ENCODE measurements at regions of chr11 and their contacts with region 1.

Region 1: DNA sequence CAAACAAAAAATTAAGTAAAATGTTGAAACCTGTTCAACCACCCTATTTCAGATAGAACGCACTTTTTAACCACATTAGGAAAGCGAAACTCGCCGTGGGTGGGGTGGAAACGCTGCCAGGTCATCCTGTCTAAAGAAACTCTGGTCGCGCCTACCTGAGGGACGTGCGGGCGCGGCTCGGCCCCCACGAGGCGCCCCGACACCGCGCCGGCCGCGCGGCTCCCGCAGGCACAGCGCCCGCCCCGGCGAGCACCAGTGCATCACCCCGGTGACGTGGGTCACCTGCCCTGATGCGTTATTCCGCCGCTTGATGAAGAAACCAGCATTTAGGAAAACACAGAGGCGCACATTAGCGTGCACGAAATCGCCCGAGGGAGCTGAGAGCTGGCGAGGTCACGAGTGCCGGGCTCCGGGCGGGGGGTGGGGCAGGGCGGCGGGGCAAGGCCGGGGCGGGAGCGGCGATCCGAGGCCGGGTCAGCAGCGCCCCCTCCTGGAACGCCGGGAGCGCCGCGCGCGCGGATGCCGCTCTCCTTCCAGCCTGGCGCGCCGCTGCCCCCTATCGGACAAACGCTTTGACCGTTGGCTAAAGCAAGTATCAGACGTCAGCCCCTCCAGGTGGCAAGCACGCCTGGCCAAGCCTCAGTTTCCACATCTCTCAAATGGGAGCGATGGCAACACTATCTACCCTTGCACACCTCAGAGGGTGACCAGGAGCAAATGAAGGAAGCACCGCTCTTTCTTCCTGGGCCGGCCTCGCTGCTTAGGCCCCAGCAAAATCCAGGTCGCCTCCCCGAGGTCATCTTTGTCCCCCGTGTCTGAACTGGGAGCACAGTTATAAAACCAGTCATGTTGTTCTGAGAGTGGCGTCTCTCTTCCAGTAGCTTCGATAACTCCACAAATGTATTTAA is 15.7 kb upstream of the SNX32 start:
- DNase-seq: peak; percentile 42
- ATAC-seq: peak; percentile 96
- H3K4me3 ChIP-seq: peak overlapping the region; percentile 64 to 77
- H3K27ac ChIP-seq: peak overlapping the region; percentile 80
- H3K4me1 ChIP-seq: 0 out of 2 replicates have a peak, but pooled peaks cover 3% of the 10 kb centered on the region
- H3K27me3 ChIP-seq: no peaks in the 10 kb centered on the region
- CTCF ChIP-seq: peak; percentile 100

Region 2: GRCh38 chr11:65720237-65720934 is 97.7 kb before region 1 on chr11 and contains the start of gene RNASEH2C:
- CTCF ChIA-PET with region 1: interaction called, 12 read pairs
- POLR2A ChIA-PET with region 1: no interaction called
- in situ Hi-C with region 1: no loop called
- intact Hi-C with region 1: no loop called
- DNase-seq: peak; percentile 58
- ATAC-seq: peak; percentile 92
- H3K4me3 ChIP-seq: peak within 1 kb of the TSS; percentile 72 to 82
- H3K27ac ChIP-seq: peak within 1 kb of the TSS; percentile 83
- H3K4me1 ChIP-seq: peaks cover 14% of the 10 kb centered on the region
- H3K27me3 ChIP-seq: no peaks in the 10 kb centered on the region
- CTCF ChIP-seq: no peak
- total RNA-seq, gene RNASEH2C: 107 TPM

Region 3: DNA sequence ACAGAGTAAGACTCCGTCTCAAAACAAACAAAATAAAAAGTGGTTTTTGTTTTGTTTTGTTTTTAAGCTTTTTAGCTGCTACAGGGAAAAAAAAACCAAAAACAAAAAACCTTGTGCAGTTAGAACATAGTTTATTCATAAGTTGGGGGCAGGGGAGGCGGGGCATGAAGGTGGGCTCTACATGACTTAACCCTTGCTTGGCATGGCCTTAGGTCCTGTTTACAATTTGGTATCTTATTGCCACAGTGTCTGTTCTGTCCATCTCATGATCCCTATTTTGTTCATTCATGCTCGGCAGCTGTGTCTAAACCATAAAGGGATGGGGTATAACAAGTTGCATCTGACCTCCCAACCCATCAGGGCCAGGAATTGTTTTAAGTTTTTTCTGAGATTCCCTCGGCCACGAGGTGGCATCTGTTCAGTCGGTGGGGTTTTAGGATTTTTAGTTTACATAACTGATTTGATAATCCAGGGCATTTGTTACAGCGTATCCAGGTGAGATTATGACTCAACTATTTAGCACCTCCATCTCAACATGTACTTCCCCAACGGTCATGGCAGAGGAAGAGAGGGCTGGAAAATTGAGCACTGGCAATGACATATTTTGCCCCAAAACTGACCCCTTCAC is 44.2 kb before region 1 on chr11:
- CTCF ChIA-PET with region 1: no interaction called
- POLR2A ChIA-PET with region 1: interaction called, 14 read pairs
- in situ Hi-C with region 1: no loop called
- intact Hi-C with region 1: no loop called
- DNase-seq: no peak
- ATAC-seq: 0 out of 2 replicates have a peak, but pooled peaks have one; percentile 9
- H3K4me3 ChIP-seq: no peak overlapping the region
- H3K27ac ChIP-seq: no peak overlapping the region
- H3K4me1 ChIP-seq: peaks cover under 1% of the 10 kb centered on the region; the same call in 1 of the 2 replicates
- H3K27me3 ChIP-seq: no peaks in the 10 kb centered on the region
- CTCF ChIP-seq: peak; percentile 57

Region 4: DNA sequence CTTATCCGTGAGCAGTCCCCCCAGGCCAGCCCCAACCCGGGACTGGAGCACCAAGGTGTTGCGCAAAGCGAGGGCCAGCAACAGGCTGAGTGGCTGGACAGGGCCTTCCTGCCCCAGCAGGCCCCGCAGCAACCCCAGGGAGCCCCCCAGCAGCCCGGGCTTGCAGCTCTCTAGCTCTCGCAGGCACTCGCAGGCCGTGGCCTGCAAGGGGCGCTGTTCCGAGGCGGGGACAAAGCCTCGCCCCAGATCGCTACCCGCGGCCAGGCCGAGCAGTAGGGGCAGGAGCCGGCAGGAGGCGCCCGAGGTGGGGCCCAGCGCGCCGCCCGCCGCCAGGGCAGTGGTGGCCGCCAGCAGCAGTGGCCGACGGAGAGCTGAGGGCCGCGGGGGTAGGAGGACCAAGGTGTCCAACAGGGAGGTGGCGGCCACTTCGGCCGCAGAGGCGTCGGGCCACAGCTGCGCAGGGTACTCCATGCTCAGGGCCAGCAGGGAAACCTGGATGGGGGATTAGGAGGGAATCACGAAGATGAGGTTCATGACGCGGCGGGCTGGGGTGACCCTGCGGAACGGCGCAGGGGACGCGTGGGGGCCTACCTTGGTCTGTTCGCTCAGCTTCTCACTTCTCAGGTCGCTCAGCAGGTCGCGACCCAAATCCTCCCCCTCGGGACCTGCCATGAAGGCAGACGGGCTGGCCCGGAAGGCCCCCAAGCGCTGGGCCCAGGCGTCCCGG is 38.1 kb before region 1 on chr11:
- CTCF ChIA-PET with region 1: interaction called, 24 read pairs
- POLR2A ChIA-PET with region 1: interaction called, 5 read pairs
- in situ Hi-C with region 1: no loop called
- intact Hi-C with region 1: loop called (anchors 5 kb)
- DNase-seq: peak; percentile 38
- ATAC-seq: peak; percentile 85
- H3K4me3 ChIP-seq: peak overlapping the region; percentile 83 to 88
- H3K27ac ChIP-seq: peak overlapping the region; percentile 85
- H3K4me1 ChIP-seq: peaks cover 10% of the 10 kb centered on the region
- H3K27me3 ChIP-seq: no peaks in the 10 kb centered on the region
- CTCF ChIP-seq: peak; percentile 100

Region 5: DNA sequence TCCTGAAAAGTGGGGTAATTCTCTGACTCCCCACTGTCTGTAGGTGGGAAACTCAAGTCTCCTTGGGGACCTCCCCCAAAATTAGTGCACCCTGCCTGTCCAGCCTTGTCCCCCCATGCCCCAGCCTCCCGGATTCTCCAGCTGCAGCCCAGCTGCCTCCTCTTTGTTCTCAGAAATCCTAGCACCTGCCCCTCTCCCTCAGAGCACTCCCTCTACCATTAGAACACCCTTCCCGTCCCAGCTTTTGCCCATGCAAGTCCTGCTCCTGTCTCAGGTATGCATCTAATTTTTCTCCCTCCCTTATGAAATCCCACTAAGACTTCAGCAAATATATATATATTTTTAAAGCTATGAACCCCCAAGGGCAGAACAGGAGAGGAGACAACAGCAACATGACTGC is 1076.1 kb after region 1 on chr11:
- CTCF ChIA-PET with region 1: no interaction called
- POLR2A ChIA-PET with region 1: no interaction called
- in situ Hi-C with region 1: no loop called
- intact Hi-C with region 1: no loop called
- DNase-seq: no peak
- ATAC-seq: no peak
- H3K4me3 ChIP-seq: no peak overlapping the region
- H3K27ac ChIP-seq: no peak overlapping the region
- H3K4me1 ChIP-seq: peaks cover 10% of the 10 kb centered on the region
- H3K27me3 ChIP-seq: no peaks in the 10 kb centered on the region
- CTCF ChIP-seq: no peak